Left ventricle myocardium superior (tissue), 1 donor: ENCODE measurements at regions of chr14 and their contacts with region 1.

Region 1: DNA sequence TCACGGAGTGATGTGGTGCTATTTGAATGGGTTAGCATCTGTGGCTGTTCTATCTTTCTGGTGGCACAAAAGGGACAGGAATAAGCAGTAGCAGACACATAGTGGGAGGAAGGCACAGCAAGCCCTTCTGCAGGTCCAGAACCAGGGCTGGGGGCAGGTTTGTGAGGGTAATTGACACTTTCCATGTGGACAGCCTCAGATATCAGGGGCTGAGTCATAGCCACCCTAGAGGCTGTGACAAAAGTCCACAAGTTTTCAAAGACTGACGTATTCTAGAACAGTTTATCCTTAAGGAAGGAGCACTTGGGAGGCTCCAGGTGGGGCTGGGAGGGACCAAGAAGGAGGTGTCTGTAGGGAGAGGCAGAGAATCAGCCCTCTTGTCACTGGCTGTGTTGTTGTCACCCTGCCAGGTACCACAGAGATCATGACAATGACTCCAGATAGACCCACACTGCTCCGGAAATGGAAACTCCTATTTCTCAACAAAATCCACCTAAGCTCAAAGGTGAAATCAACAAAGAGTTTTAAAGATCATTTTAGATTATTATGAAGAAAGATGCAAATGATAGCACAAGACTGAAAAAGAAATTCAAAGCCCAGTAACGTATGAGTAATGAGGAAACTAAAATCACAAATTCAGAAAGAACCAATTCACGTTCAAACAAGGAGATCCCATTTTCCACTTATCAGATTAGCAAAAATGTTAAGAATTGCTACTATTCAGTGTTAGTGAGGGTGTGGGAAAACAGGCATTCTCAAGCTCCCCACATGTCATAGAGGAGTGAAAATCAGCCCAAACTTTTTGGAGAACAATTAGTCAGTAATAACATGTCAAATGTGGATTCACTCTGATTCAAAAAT is 48.3 kb downstream of the NFKBIA start:
- DNase-seq: no peak
- ATAC-seq: no peak

Region 2: DNA sequence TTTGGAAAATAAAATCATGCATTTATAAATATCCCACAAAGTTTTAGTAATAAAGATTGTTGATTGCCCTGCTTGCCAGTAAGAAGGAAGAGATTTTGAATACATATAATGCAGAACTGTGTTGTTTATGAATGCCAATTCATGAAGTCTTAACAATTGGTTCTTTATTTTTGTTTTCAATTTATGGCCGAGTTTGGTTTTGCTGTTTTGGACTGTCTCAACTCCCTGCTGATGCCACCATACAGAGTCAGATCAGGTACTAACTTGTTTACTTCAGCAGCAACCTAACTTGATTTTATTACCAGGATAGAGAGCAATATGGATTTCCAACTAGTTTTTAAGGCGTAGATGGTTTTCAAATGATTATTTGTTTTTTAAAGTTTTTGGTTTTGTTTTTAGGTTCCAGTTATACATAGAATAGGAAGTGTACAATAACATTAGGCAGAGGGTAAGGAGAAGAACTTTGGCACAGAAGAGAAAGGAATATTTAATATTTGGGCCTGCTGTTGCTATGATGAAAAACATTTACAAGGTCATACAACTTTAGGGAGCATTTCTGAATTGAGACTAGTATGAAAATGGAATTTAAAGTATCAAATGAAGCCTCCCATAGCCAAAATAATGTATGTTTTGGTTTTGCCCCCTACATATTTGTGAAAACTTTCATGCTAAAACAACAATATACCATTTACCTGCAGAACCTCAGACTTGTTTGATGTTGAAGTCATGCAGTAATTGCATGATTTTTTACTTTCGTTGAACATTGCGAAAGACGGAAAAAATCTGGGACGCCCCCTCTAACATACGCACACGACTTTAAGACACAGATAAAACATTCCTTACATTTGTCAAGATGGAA is 311.0 kb before region 1 on chr14:
- intact Hi-C with region 1: loop called (anchors 5 kb)
- DNase-seq: no peak
- ATAC-seq: no peak